Heart left ventricle (tissue), 16 donors: ENCODE measurements at regions of chr9 and their contacts with region 1.

Region 1: DNA sequence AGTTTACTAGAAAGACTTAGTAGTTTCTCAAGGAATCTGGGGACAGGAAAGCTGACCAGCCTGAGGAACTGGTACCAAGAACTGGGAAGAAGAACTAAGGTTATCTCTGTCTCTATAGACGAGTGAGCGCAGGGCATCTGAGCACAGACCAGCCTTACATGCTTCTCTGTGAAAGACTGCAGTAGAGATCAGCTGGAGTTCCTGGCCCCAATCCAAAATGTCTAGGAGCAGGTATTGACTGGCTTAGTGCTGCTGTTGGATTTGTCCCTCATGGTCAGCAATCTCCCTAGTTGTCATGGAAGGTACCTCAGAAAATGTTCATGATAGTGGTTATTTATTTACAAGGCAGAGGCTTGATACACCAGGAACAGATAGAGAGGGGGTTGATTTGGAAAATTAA is 13.3 kb downstream of the NUP214 start:
- DNase-seq: no peak
- ATAC-seq: no peak
- H3K4me3 ChIP-seq: no peak overlapping the region
- H3K27ac ChIP-seq: no peak overlapping the region
- H3K4me1 ChIP-seq: no peaks in the 10 kb centered on the region
- H3K27me3 ChIP-seq: no peaks in the 10 kb centered on the region
- CTCF ChIP-seq: no peak
- POLR2A ChIP-seq: no peak

Region 2: GRCh38 chr9:131178382-131178781 is 39.7 kb after region 1 on chr9:
- intact Hi-C with region 1: no loop called
- DNase-seq: peak; percentile 64 to 83 (median 69)
- ATAC-seq: peak; percentile 82 to 96 (median 94)
- H3K4me3 ChIP-seq: no peak overlapping the region
- H3K27ac ChIP-seq: peak overlapping the region in 1 of 12 donors; percentile 31
- H3K4me1 ChIP-seq: peaks cover 0 to 29% (median 6%) of the 10 kb centered on the region in 12 donors
- H3K27me3 ChIP-seq: no peaks in the 10 kb centered on the region
- CTCF ChIP-seq: peak; percentile 87 to 96 (median 93)
- POLR2A ChIP-seq: no peak

Region 3: GRCh38 chr9:131447148-131447547 is 308.5 kb after region 1 on chr9:
- intact Hi-C with region 1: loop called in 1 of 10 experiments (anchors 10 kb)
- DNase-seq: peak in 1 of 5 donors; percentile 38
- ATAC-seq: peak in 3 of 4 donors; percentile 60 to 81 (median 71)
- H3K4me3 ChIP-seq: no peak overlapping the region
- H3K27ac ChIP-seq: no peak overlapping the region
- H3K4me1 ChIP-seq: peaks cover 0 to 6% (median 0%) of the 10 kb centered on the region in 12 donors
- H3K27me3 ChIP-seq: no peaks in the 10 kb centered on the region
- CTCF ChIP-seq: no peak
- POLR2A ChIP-seq: no peak